Activated CD4-positive, alpha-beta T cell treated with anti-CD3 and anti-CD28 coated beads, Interleukin-2, amount 10 ng/mL, durations not matched to agents 24 days and 14 days (primary cell): ENCODE measurements at regions of chr20 and their contacts with region 1.

Region 1: GRCh38 chr20:16729565-16730456 is at the start of gene SNRPB2:
- DNase-seq: peak; percentile 97
- H3K4me3 Mint-ChIP-seq: peak within 1 kb of the TSS; percentile 100
- H3K27ac Mint-ChIP-seq: peak within 1 kb of the TSS; percentile 100
- H3K4me1 Mint-ChIP-seq: peaks cover 49% of the 10 kb centered on the region
- H3K27me3 Mint-ChIP-seq: peaks cover 16% of the 10 kb centered on the region
- total RNA-seq, gene SNRPB2: 132 and 134 TPM in 2 replicates

Region 2: DNA sequence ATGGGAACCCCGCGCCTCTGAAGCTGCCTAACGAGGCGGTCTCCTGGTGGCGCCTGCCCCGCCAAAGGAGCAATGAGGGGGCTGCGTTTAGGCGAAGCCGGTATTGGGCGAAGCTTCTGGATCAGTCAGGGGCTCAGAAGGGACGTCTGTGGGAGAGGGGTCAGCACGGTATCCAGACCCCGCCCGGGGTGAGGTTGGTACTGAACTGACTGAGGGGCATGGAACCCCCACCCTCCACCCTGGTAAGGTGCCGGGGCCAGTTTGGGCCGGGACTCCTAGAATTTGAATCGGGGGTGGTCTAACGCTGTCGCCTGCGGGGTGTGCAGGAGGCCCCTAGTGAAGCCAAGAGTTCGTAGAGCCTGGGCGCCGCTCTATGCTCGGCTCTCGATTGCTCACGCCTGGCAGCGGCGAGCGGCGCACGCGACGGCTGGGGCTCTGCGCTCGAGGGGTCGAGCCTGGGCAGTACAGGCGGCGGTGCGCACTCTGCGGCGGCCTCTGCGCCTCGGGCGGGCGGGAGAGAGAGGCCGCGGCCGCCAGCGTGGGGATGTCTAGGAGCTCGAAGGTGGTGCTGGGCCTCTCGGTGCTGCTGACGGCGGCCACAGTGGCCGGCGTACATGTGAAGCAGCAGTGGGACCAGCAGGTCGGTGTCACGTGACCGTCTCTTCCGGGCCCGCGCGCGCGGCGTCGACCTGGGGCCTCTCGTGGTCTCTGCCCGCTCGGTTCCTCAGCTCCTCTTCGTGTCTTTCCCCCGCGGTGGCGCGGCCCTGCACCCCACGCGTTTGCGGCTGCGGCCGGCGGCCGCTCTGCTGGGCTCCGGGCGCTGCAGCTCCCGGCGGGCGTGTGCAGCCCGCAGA is 1407.8 kb after region 1 on chr20 and contains the starts of genes KAT14 and PET117:
- intact Hi-C with region 1: loop called (anchors 10 kb)
- DNase-seq: peak; percentile 98
- H3K4me3 Mint-ChIP-seq: peak within 1 kb of the TSS; percentile 75
- H3K27ac Mint-ChIP-seq: peak within 1 kb of the TSS; percentile 89
- H3K4me1 Mint-ChIP-seq: peaks cover 26% of the 10 kb centered on the region
- H3K27me3 Mint-ChIP-seq: peaks cover 3% of the 10 kb centered on the region
- total RNA-seq, gene KAT14: 16.5 and 16.8 TPM in 2 replicates
- total RNA-seq, gene PET117: 18.5 and 19.5 TPM in 2 replicates